ENCODE measurements at regions of chr11 and their contacts with region 1.

Region 1: DNA sequence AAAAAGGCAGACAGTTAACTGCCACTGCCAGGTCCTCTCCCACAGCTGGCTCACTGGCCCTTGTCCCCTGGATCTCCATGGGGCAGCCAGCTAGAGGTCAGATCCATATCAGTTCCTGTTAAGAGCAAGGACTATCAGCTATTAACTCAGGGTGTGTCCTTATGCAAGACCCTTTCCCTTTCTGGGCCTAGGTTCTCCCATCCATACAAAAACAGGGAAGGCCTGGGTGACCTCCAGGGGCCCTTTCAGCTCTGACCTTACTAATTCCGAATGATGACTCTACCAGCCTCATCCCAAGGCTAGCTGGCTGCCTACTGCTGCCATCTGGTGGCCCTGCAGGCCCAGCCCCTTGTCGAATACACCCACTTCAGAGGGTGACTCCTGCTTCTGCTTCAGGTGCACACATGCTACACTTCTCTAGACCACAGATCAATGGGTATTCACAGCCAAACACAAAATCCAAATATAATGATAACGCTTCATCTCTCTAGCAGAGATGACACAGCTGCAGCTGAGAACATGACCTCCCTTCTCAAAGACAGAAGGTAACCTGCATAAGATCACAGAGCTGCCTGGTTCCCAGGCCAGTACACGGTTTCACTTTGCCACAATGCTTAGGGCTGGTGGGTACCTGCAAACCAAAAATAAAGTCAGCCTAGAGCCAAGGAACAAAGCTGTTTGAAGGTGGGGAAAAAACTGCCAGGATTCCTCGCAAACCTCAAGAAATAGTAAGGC is 34.1 kb downstream of the SERGEF start:
- DNase-seq: no peak
- H3K4me3 ChIP-seq: no peak overlapping the region
- CTCF ChIP-seq: peak; percentile 86

Region 2: DNA sequence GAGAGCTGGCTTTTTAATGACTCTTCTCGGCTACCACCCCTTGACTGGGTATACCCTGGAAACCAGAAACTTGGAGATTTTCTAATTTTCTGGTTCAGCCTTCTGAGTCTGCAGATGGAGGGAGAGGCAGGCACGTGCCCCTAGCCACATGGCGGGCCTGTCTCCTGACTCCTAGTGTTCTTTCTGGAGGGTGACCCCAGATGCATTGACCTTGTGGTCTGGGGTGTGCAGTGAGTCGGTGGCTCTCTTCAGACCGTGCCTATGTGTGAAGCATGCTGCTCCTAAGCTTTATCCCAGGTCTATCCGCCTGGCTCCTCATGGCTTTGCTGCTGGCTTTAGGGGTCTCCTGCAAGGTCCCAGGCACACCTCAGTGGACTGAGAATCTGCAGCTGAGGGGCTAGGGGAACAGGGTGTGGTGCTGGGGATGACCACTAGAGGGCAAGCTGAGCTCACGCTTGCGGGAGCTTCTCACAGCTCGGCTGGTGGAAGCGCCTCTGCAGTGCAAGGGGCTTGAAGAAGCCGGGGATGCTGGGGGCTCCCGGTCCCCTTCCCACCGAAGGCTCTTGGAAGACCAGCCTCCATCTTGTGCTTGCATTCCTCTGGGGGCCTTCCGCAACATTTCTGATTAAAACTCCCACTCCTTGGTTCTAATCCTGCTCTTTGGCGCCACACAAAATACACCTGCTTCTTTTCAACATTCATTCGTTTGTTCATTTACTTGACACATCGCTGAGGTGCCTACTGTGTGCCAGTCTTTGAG is 379.8 kb before region 1 on chr11:
- CTCF ChIA-PET with region 1: interaction called, 62 read pairs
- POLR2A ChIA-PET with region 1: no interaction called
- DNase-seq: peak; percentile 3
- H3K4me3 ChIP-seq: no peak overlapping the region
- CTCF ChIP-seq: peak; percentile 97

Region 3: GRCh38 chr11:17760102-17761029 is 218.4 kb before region 1 on chr11:
- CTCF ChIA-PET with region 1: interaction called, 101 read pairs
- POLR2A ChIA-PET with region 1: no interaction called
- DNase-seq: no peak
- H3K4me3 ChIP-seq: no peak overlapping the region
- CTCF ChIP-seq: peak; percentile 60

Region 4: GRCh38 chr11:17960091-17960490 is 18.6 kb before region 1 on chr11:
- CTCF ChIA-PET with region 1: interaction called, 37 read pairs
- POLR2A ChIA-PET with region 1: no interaction called
- DNase-seq: no peak
- H3K4me3 ChIP-seq: no peak overlapping the region
- CTCF ChIP-seq: no peak

Region 5: GRCh38 chr11:17991783-17992433 is 13.2 kb after region 1 on chr11:
- CTCF ChIA-PET with region 1: interaction called, 127 read pairs
- POLR2A ChIA-PET with region 1: no interaction called
- DNase-seq: no peak
- H3K4me3 ChIP-seq: no peak overlapping the region
- CTCF ChIP-seq: peak; percentile 71

Measured in AG04449 (cell line).